Dendritic cell treated with granulocyte-macrophage colony-stimulating factor and Interleukin-4, amounts not matched to agents 40 ng/mL and 50 ng/mL, for 4 days (primary cell): ENCODE measurements at regions of chr4 and their contacts with region 1.

Region 1: DNA sequence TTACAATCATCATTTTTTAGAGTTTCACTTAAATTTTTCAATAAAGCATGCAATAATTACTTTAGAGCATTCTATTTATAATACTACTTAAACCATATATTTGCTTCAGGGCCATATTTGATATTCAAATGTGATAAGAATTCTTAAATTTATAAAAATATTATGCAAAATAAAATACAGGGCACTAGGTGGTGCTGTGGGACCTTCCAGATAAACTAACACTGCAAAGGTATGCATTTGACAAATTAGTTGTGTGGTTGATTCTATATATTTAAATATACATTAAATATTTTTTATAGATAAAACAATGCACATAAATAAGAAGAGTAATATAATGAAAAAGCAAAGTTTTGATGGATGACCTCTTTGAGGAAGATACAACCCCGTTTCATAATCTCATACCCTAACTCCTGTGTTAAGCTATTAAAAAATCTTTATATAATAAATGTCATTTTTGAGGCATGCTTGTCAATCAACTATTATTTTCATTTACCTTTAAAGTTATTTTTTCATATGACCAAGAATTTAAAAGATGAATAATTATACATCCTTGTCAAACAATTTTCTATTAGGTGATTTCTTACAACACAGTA is 128.4 kb downstream of the REELD1 start:
- H3K4me3 Mint-ChIP-seq: no peak overlapping the region
- H3K27ac Mint-ChIP-seq: no peak overlapping the region
- H3K4me1 Mint-ChIP-seq: no peaks in the 10 kb centered on the region
- H3K27me3 Mint-ChIP-seq: no peaks in the 10 kb centered on the region

Region 2: GRCh38 chr4:146916479-146917076 is 573.9 kb after region 1 on chr4:
- intact Hi-C with region 1: loop called (anchors 1 kb)
- H3K4me3 Mint-ChIP-seq: no peak overlapping the region
- H3K27ac Mint-ChIP-seq: no peak overlapping the region
- H3K4me1 Mint-ChIP-seq: no peaks in the 10 kb centered on the region
- H3K27me3 Mint-ChIP-seq: peaks cover 1% of the 10 kb centered on the region